Left cardiac atrium (tissue), 4 donors: ENCODE measurements at regions of chr21 and their contacts with region 1.

Region 1: DNA sequence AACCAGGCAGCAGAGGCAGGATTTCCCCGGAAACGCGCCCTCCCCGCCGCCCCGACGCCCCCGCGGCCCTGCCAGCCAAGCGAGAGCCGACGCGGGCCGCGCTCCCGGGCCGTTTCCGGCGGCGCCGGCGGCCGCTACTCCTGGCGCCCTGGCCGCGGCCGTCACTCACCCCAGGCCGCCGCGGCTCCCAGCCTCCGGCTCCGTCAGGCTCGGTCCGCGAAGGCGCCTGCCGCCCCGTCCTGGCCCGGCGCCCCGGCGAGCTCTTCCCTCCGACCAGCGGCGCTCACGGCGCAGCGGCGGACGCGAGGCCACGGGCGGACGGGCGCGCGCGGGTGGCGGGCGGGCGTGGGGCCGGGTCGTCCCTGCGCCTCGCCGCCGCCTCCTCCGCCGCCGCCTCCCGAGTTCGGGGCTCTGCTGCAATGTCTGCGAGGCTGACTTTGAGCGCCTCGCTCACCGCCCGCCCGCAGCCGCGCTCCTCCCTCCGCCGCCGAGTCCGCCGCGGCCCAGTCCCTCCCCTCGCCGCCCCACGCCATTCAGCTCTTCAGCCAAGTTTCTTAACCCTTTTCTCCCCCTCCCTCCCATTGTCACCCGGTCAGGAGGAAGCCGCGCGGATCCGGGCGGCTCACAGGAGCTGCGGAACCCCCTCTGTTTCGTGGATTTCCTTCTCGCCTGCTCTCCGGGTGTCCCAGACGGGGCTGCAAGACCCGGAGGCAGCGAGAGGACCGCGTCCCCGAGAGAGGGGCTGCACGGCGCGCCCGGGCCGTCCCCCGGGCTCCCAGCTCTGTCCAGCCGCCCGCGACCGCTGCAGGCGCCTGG is at the start of gene NRIP1:
- DNase-seq: peak; percentile 94
- ATAC-seq: peak; percentile 92 to 94
- total RNA-seq, gene NRIP1: 30.1 to 36.4 TPM

Region 2: GRCh38 chr21:15121655-15122120 is 56.9 kb after region 1 on chr21:
- intact Hi-C with region 1: loop called in 1 of 2 experiments (anchors 5 kb)
- DNase-seq: peak; percentile 54
- ATAC-seq: peak; percentile 92 to 93

Region 3: DNA sequence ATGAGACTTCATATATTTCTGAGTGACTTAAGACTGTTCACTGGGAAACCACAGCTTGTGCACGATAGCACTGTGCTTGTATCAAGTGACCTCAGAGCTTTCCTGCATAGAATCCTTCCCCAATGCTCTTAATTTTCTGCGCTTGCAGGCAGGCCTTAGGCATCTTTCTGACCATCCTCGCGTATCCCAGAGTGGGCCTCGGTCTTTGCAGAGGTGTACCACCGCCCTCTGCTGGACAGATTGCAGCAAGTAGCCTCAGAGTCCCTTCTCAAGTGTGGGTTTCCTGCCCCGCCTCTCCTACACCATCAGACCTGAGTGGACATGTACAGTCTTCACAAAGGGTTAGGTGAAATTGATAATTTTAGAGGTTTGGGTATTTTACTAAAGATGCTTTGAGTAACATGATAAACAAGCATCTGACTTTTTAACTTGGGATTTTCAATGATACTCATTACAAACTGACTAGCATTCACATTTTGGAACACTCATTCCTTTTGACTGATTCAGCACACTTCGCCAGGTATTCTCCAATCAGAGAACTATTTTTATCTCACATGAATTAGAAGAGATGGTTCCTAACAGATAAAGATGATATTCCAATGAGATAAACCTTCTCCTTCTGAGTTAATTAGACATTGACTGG is 418.5 kb after region 1 on chr21:
- intact Hi-C with region 1: loop called in 1 of 2 experiments (anchors 5 kb)
- DNase-seq: peak; percentile 91
- ATAC-seq: peak; percentile 100